Heart right ventricle (tissue), 16 donors: ENCODE measurements at regions of chrX and their contacts with region 1.

Region 1: DNA sequence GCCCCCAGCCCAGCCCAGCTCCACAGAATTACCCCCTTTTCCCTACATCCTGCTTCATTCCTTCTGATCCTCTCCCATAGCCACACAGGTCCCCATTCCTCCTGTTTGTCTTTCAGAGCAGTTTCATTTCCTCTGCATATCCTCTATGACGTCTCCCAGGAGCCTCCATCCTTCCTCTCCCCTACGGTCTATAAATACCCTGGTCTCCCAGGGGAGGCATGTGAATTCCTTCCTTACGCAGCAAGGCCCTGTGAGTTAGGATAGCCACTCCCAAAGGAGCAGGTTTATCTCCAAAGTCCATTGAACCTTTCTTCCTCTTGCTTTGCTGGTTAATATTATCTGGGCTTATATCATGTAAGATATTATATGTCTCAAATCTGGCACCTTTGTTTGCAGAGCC is 8.4 kb upstream of the APLN start:
- DNase-seq: peak in 1 of 2 donors; percentile 62
- ATAC-seq: peak in 7 of 8 donors; percentile 53 to 90 (median 79)
- H3K4me3 ChIP-seq: no peak overlapping the region
- H3K27ac ChIP-seq: peak overlapping the region in 3 of 10 donors; percentile 22 to 43 (median 41)
- H3K4me1 ChIP-seq: peaks cover 0 to 28% (median 0%) of the 10 kb centered on the region in 9 donors
- H3K27me3 ChIP-seq: peaks cover 0 to 11% (median 0%) of the 10 kb centered on the region in 7 donors
- CTCF ChIP-seq: no peak

Region 2: GRCh38 chrX:129678614-129679195 is 15.5 kb after region 1 on chrX:
- intact Hi-C with region 1: no loop called
- DNase-seq: no peak
- ATAC-seq: peak in 2 of 8 donors; percentile 18 to 46
- H3K4me3 ChIP-seq: peak overlapping the region in 9 of 10 donors; percentile 30 to 51 (median 47)
- H3K27ac ChIP-seq: peak overlapping the region; percentile 65 to 89 (median 82)
- H3K4me1 ChIP-seq: peaks cover 0 to 13% (median 5%) of the 10 kb centered on the region in 9 donors
- H3K27me3 ChIP-seq: no peaks in the 10 kb centered on the region
- CTCF ChIP-seq: no peak

Region 3: DNA sequence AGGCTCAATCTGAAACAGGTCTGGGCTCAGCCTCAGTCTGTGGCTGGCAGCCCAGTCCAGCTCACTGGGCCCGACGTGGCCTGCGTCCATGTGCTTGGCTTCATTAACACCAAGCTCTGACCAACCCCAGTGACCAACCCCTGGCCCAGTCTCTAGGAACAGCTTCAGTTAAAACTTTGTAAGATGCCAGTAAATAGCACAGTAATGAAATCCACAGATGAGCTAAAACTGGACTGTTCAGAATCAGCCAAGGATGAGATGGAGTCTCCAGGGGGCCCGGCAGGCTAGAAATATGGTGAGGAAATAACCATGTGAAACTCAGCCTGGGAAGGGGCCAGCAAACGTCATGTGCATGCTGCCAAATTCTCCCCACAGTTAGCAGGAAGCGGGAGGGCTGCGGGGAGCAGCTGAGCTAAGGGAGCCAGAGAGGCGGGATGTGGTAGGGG is 38.5 kb after region 1 on chrX:
- intact Hi-C with region 1: loop called in 1 of 10 experiments (anchors 5 kb)
- DNase-seq: peak; percentile 66 to 77
- ATAC-seq: peak; percentile 49 to 84 (median 70)
- H3K4me3 ChIP-seq: no peak overlapping the region
- H3K27ac ChIP-seq: peak overlapping the region in 7 of 10 donors; percentile 5 to 71 (median 46)
- H3K4me1 ChIP-seq: peaks cover 0 to 18% (median 6%) of the 10 kb centered on the region in 9 donors
- H3K27me3 ChIP-seq: peaks cover 0 to 4% (median 0%) of the 10 kb centered on the region in 7 donors
- CTCF ChIP-seq: no peak